Ovary (tissue), 10 donors: ENCODE measurements at regions of chr16 and their contacts with region 1.

Region 1: DNA sequence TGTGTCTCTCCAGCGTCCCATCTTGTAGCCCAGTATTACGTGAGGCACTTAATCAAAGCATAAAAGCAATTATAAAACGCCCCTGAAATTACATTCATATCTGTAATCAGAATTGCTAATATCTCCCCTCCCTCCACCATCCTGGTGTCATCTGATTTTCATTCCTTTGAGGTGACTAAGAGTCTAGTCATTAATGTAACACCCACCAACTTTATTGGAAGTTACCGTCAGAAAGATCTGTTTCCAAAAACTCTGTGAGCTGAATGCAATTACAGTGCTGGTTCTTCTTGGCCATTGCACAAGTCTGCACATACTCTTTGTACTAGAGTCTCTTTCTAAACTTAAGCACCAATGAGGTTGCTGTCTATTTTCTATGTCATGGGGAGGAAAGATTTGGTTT is 12.5 kb upstream of the MAF start:
- DNase-seq: no peak
- H3K4me3 ChIP-seq: no peak overlapping the region
- H3K27ac ChIP-seq: no peak overlapping the region
- H3K4me1 ChIP-seq: peaks cover 1% of the 10 kb centered on the region
- H3K27me3 ChIP-seq: no peaks in the 10 kb centered on the region
- CTCF ChIP-seq: no peak
- EP300 ChIP-seq: no peak
- POLR2A ChIP-seq: no peak

Region 2: DNA sequence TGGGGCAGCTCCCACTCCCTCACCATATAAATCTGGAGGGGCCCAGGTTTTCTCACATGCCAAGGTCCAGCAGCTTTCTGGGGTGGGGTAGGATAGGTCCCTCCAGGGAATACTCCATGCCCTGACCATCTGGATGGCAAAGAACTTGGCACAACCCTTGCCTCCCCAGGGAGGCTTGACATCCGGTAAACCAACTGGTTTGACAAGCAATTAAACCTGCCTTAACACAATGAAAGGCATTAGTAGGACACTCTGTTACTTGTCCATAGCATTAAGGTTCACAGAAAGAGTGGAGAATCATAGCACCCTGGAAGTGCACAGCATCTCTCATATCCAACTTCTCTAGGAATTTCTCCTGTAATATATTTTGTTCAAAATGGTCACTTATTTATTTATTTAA is 51.4 kb after region 1 on chr16:
- intact Hi-C with region 1: no loop called
- DNase-seq: no peak
- H3K4me3 ChIP-seq: no peak overlapping the region
- H3K27ac ChIP-seq: no peak overlapping the region
- H3K4me1 ChIP-seq: no peaks in the 10 kb centered on the region
- H3K27me3 ChIP-seq: no peaks in the 10 kb centered on the region
- CTCF ChIP-seq: no peak
- EP300 ChIP-seq: no peak
- POLR2A ChIP-seq: no peak

Region 3: GRCh38 chr16:79707876-79708275 is 94.9 kb after region 1 on chr16:
- intact Hi-C with region 1: loop called in 1 of 4 experiments (anchors 10 kb)
- DNase-seq: peak; percentile 24 to 73 (median 45)
- H3K4me3 ChIP-seq: no peak overlapping the region
- H3K27ac ChIP-seq: no peak overlapping the region
- H3K4me1 ChIP-seq: no peaks in the 10 kb centered on the region
- H3K27me3 ChIP-seq: no peaks in the 10 kb centered on the region
- CTCF ChIP-seq: no peak
- EP300 ChIP-seq: no peak
- POLR2A ChIP-seq: no peak